AG04449 (cell line): ENCODE measurements at regions of chr20 and their contacts with region 1.

Region 1: GRCh38 chr20:31605031-31605901 is at the start of gene ID1:
- DNase-seq: no peak
- H3K4me3 ChIP-seq: peak within 1 kb of the TSS; percentile 88
- CTCF ChIP-seq: no peak

Region 2: GRCh38 chr20:31308535-31309162 is 296.6 kb before region 1 on chr20 and contains the start of gene DEFB116:
- CTCF ChIA-PET with region 1: no interaction called
- POLR2A ChIA-PET with region 1: no interaction called
- DNase-seq: no peak
- H3K4me3 ChIP-seq: no peak within 1 kb of the TSS
- CTCF ChIP-seq: no peak

Region 3: DNA sequence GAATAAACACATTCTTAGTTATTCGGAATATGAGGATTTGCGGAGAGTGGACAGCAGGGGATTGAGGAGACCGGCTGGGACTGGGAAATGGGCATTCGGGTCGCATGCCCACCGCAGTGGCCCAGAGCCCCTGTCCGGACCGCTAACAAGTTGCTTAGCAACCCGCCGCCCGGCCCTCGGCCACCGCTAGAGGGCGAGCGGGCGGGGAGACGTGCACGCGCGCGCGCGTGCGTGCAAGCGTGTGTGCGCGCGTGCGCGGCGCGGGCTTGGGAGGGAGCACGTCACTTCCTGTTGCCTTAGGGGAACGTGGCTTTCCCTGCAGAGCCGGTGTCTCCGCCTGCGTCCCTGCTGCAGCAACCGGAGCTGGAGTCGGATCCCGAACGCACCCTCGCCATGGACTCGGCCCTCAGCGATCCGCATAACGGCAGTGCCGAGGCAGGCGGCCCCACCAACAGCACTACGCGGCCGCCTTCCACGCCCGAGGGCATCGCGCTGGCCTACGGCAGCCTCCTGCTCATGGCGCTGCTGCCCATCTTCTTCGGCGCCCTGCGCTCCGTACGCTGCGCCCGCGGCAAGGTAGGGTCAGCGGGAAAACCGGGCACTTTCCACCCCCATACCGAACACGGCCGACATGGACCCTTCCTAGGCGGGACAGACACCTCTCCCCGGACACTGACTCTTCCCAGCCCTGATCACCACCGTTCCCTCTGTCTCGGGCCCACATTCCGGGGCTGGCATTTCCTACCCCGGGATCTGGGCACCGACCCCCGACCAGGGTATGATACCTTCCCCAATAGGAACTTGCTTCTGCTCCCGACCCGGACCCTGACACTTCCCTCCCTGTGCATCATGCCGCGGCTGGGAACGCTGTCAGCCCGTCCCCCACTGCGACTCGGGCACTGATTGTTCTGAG is 90.9 kb before region 1 on chr20 and contains the start of gene HM13:
- CTCF ChIA-PET with region 1: interaction called, 72 read pairs
- POLR2A ChIA-PET with region 1: no interaction called
- DNase-seq: peak; percentile 46
- H3K4me3 ChIP-seq: peak within 1 kb of the TSS; percentile 99
- CTCF ChIP-seq: peak; percentile 89

Region 4: GRCh38 chr20:31547017-31547675 is 58.1 kb before region 1 on chr20:
- CTCF ChIA-PET with region 1: interaction called, 1,856 read pairs
- POLR2A ChIA-PET with region 1: interaction called, 6 read pairs
- DNase-seq: no peak
- H3K4me3 ChIP-seq: peak overlapping the region; percentile 59
- CTCF ChIP-seq: no peak

Region 5: GRCh38 chr20:31560094-31560899 is 45.0 kb before region 1 on chr20:
- CTCF ChIA-PET with region 1: interaction called, 1,856 read pairs
- POLR2A ChIA-PET with region 1: interaction called, 24 read pairs
- DNase-seq: no peak
- H3K4me3 ChIP-seq: no peak overlapping the region
- CTCF ChIP-seq: peak; percentile 89

Region 6: DNA sequence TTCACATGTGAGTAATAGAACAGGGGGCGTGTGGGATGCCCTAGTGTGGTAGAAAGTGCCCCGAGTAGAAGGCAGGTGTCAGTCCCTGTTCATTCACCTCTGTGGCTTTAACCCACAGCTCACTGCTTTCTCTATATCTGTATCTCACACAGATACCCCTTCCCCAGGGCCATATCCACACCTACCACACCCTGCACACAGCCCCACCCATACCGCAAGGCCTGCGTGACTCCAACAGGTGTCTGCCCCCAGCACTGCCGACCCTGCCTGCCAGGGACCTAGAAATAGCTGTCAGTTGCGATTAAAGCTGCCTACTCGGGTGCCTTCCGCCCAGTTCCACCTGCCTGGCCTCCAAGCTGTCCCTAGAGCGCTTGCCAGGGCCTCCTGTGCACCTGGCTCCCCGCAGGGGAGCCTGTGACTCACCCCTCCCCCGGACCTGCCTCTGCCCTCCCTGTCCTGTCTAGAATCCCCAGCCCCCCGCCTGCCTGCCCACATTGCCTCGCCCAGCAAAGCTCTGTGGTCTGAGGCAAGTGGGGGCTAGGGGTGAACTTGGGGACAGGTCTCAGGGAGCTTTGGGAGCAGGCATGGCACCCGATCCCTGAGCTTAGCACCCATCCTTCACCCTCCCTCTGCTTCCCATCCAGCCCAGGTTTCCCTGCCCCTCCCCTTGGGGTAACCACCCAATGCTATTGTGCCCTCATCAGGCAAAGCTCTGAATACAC is 38.4 kb before region 1 on chr20:
- CTCF ChIA-PET with region 1: interaction called, 1,856 read pairs
- POLR2A ChIA-PET with region 1: interaction called, 51 read pairs
- DNase-seq: no peak
- H3K4me3 ChIP-seq: no peak overlapping the region
- CTCF ChIP-seq: no peak

Region 7: DNA sequence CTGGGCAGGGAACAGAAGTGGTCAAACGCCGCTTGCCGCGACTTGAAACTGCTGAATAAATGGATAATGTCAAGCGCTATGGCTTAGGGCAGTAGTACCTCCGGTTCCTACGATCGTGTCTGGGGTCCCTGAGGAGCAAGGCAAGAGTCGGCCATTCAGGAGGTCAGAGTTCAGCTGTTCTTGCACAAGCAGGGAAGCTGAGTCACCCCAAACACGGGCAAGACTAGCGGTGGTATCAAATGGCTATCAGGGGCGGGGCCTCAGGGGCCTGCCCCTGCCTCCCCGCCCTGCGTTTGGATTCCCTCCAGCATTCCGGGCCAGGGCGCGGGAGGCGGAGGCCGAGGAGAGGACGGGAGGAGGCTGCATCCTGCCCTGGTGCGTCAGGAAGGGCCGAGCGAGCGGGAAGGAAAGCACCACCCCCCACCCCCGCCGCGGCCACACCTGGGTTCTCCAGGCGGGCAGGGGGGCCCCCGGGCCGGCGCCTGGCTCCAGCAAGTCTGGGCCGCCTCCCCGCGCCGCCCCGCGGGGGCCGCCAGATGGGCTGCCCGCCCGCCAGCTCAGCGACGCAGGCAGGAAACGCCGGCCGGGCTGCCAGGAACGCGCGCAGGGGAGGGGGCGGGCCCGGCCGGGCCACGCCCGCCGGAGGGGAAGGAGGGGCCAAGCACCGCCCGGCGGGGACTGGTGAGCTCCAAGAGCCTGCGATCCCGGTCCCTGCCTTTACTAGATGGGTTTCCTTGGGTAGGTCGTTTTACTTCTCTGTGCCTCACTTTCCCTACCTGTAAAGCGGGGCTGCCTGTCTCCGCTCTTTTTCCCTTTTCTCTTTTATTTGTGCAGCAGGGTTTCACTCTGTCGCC is 32.3 kb before region 1 on chr20:
- CTCF ChIA-PET with region 1: interaction called, 1,856 read pairs
- POLR2A ChIA-PET with region 1: interaction called, 51 read pairs
- DNase-seq: peak; percentile 89
- H3K4me3 ChIP-seq: peak overlapping the region; percentile 62
- CTCF ChIP-seq: no peak

Region 8: DNA sequence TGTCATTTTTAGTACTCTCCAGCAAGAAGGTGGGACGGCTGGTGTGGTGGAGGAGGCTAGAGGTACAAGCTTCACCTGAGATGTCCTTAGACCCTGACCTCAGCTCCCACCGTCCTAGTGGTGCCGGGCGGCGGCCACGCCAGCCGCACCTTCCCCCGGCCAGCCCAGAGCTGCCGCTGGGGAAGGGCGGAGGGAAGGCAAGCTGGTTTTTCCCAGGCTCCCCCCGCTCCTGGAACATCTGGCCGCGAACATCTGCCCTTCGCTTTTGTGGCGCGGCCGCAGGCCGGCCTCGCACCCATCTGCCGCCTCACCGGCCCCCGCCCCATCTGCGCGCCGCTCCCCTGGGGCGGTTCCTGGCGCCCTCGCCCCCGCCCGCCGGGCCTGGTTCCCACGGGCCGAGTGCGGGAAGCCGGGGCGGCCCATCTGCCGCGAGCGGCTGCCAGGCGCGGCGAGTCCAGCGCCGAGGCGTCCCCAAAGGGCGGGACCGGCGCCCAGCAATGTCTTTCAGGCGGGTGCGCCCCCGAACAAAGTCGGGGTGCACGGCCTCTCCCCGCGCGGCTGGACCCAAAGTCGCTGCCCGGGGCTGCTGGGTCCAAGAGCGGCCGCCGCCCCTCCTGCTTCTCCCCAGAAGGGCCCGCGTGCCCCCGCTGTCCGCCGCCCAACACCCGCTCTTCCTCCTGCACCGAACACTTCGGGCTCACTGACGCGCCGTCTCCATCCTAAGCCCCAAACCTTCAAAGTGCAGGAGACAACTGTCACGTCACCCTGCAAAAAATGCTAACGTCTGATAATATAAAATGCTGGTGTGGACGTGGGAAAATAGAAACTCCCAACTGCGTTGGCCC is 17.5 kb before region 1 on chr20:
- CTCF ChIA-PET with region 1: interaction called, 32 read pairs
- POLR2A ChIA-PET with region 1: interaction called, 17 read pairs
- DNase-seq: no peak
- H3K4me3 ChIP-seq: peak overlapping the region; percentile 55
- CTCF ChIP-seq: no peak